Activated CD4-positive, alpha-beta memory T cell treated with anti-CD3 and anti-CD28 coated beads for 36 hours (primary cell): ENCODE measurements at regions of chr4 and their contacts with region 1.

Region 1: GRCh38 chr4:113744667-113745240 is 16.8 kb downstream of the CAMK2D start:
- DNase-seq: no peak
- H3K4me3 Mint-ChIP-seq: no peak overlapping the region
- H3K27ac Mint-ChIP-seq: no peak overlapping the region
- H3K4me1 Mint-ChIP-seq: peaks cover 31% of the 10 kb centered on the region
- H3K27me3 Mint-ChIP-seq: no peaks in the 10 kb centered on the region

Region 2: GRCh38 chr4:113371111-113371510 is 373.6 kb before region 1 on chr4:
- CTCF ChIA-PET with region 1: no interaction called
- POLR2A ChIA-PET with region 1: no interaction called
- intact Hi-C with region 1: no loop called
- DNase-seq: no peak
- H3K4me3 Mint-ChIP-seq: no peak overlapping the region
- H3K27ac Mint-ChIP-seq: no peak overlapping the region
- H3K4me1 Mint-ChIP-seq: no peaks in the 10 kb centered on the region
- H3K27me3 Mint-ChIP-seq: peaks cover 8% of the 10 kb centered on the region

Region 3: DNA sequence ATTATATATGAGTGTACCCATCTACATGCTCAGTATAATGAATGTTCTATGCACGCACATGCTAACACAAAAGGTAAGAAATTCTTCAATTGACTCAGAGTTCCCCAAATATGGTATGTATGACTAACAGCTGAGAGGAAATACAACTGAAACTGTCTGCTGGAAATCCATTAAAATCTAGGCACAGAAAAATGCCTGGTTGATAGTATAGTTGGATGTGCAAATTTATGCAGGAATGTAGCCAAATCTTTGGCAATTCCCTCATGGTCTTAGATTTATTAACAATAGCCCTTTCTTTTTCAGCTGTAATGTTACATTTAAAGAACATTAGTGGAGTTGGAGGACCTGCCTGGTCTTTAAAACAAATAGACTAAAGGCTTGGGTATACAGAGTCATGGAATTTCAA is 11.3 kb after region 1 on chr4:
- CTCF ChIA-PET with region 1: no interaction called
- POLR2A ChIA-PET with region 1: no interaction called
- intact Hi-C with region 1: loop called (anchors 1 kb)
- DNase-seq: no peak
- H3K4me3 Mint-ChIP-seq: peak overlapping the region; percentile 28
- H3K27ac Mint-ChIP-seq: peak overlapping the region; percentile 66
- H3K4me1 Mint-ChIP-seq: peaks cover 44% of the 10 kb centered on the region
- H3K27me3 Mint-ChIP-seq: no peaks in the 10 kb centered on the region